Heart right ventricle (tissue), 16 donors: ENCODE measurements at regions of chr7 and their contacts with region 1.

Region 1: GRCh38 chr7:132560825-132561529 is 15.3 kb downstream of the PLXNA4 start:
- DNase-seq: no peak
- ATAC-seq: no peak
- H3K4me3 ChIP-seq: no peak overlapping the region
- H3K27ac ChIP-seq: no peak overlapping the region
- H3K4me1 ChIP-seq: no peaks in the 10 kb centered on the region
- H3K27me3 ChIP-seq: peaks cover 0 to 9% (median 4%) of the 10 kb centered on the region in 7 donors
- CTCF ChIP-seq: no peak

Region 2: DNA sequence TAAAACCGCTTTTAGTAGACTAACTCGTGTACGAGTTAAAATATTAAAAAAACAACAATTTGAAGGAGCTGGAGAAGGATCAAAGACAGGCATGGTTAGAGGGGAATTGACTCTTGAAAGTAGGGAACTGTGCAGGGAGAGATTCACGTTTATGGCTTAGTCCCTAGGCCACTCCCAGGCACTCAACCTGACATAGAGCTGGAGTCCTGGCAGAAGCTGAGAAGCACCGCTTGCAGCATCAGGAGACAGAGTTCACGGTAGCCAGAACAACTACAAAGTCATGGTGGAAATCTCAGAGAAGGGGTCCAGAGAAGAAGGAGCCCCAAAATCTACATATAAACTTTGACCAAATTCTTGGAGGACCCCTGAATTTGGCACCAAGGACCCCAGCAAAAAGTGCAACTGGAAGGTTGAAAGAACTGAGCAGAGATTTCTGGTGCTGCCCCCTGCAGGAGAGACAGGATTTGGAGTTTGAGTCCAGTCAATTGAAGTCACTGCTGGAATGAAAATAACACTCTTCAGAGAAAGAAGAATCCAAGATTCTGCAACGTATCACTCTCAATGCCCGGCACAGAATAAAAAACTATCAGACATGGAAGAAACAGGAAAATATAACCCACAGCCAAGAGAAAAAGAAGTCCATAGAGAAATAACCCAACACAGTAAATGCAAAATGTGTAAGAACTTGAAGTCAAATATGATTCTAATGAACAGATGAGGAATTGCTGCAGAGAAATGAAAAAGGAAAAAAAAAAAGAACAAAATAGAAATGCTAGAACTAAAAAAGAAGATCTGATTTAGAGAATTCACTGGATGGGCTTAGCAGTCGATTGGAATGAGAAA is 511.3 kb before region 1 on chr7:
- intact Hi-C with region 1: no loop called
- DNase-seq: no peak
- ATAC-seq: no peak
- H3K4me3 ChIP-seq: no peak overlapping the region
- H3K27ac ChIP-seq: no peak overlapping the region
- H3K4me1 ChIP-seq: no peaks in the 10 kb centered on the region
- H3K27me3 ChIP-seq: peaks cover 0 to 5% (median 0%) of the 10 kb centered on the region in 7 donors
- CTCF ChIP-seq: peak; percentile 37 to 69 (median 65)

Region 3: DNA sequence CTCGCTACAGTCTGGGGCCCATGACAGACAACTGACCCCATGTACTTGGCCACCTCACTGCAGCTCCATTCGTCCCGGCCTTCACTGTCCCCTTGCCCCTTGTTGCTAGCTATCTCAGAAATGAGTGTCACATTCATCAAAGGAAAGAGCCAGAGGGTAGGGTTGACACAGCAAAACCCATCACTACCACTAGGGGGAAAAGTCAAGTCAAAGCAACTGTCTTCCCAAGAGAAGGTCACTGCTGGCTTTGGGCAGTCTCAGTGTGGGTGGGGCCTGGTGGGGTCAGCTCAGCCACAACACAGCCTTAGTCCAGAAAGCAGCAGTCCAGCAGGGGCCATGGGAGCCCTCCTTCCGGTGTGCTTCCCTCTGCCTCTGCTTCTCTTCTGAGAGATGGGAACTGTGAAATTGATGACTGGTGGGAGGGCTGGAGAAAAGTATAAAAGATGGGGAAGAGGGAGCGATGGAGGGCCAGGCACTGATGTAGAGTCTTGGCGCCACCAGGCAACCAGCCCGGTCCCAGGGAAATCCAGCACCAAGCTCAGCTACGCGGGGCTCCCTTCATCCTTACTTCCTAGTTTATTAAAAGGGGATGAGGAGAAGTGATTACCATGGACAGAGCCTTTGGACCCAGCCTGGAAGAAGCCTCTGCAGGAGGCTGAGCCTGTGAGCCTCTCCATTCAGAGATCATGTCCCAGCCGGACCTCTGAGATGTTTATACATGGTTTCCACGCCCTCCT is 42.7 kb before region 1 on chr7:
- intact Hi-C with region 1: loop called in 1 of 10 experiments (anchors 10 kb)
- DNase-seq: no peak
- ATAC-seq: no peak
- H3K4me3 ChIP-seq: no peak overlapping the region
- H3K27ac ChIP-seq: no peak overlapping the region
- H3K4me1 ChIP-seq: peaks cover 0 to 46% (median 14%) of the 10 kb centered on the region in 9 donors
- H3K27me3 ChIP-seq: no peaks in the 10 kb centered on the region
- CTCF ChIP-seq: peak in 6 of 9 donors; percentile 6 to 40 (median 22)